ENCODE measurements at regions of chrX and their contacts with region 1.

Region 1: DNA sequence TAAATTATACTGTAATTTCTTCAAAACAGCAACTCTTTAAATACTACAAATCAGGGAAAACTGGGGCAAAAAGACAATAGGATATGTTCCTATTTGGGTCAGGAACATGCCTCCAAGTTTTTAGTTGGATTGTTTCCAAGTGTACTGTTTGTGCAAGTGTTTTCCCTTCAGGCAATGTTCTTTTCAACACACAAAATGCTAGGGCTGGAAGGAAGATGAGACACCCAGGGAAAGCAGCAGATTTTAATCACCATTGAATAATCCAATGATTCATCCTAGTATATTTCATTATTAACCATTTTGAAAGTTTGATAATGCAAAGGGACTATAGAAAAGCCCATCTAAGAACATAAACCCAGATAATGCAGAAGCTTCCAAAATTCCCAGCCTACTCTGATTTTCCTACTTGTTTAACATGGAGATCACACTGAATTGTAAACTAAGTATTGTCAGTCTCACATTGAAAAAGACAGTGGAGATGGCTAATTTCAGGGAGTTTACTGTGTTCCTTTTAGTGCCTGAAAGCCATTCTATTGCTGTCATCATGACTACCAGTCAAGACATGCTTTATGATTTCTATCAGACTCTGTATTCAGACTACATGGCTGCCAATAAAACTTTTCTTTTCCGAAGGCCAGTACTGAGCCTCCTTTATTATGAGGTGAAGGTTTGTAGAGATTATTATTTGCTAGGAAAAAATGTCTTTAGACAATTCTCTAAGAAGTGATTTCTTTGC is 38.6 kb downstream of the COL4A6 start:
- DNase-seq: peak; percentile 10 to 70
- H3K4me3 ChIP-seq: 0 out of 2 replicates have a peak overlapping the region, but pooled peaks have one; percentile 15
- H3K27ac ChIP-seq: peak overlapping the region; percentile 88
- H3K4me1 ChIP-seq: peaks cover 62% of the 10 kb centered on the region
- H3K27me3 ChIP-seq: no peaks in the 10 kb centered on the region
- CTCF ChIP-seq: no peak

Region 2: DNA sequence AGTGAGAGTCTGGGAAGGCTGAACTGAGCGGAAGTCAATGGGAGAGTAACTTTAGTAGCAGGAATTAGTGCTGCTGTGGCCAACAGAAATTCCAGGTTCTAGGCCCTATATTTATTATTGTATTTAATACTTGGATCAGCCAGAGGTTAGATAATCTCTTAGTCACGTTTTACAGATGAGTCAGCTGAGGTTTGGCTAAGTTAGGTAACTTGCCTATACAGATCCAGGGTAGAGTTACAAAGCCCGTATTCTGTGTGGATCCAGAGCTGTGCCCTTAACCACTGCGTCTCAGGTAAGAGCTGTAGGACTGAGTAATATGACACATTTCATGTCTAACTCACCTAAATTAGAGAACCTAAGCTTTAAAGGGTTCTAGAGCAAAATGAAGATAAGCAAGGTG is 328.7 kb before region 1 on chrX:
- CTCF ChIA-PET with region 1: no interaction called
- POLR2A ChIA-PET with region 1: no interaction called
- intact Hi-C with region 1: no loop called
- DNase-seq: peak; percentile 19 to 73
- H3K4me3 ChIP-seq: no peak overlapping the region
- H3K27ac ChIP-seq: peak overlapping the region; percentile 44; the same call in 1 of the 2 replicates
- H3K4me1 ChIP-seq: peaks cover 19% of the 10 kb centered on the region
- H3K27me3 ChIP-seq: no peaks in the 10 kb centered on the region
- CTCF ChIP-seq: no peak

Region 3: GRCh38 chrX:108312938-108313337 is 86.7 kb before region 1 on chrX:
- CTCF ChIA-PET with region 1: interaction called, 3 read pairs
- POLR2A ChIA-PET with region 1: no interaction called
- intact Hi-C with region 1: loop called (anchors 1 kb)
- DNase-seq: peak; percentile 68 to 84
- H3K4me3 ChIP-seq: no peak overlapping the region
- H3K27ac ChIP-seq: 0 out of 2 replicates have a peak overlapping the region, but pooled peaks have one; percentile 18
- H3K4me1 ChIP-seq: peaks cover 22% of the 10 kb centered on the region; the same call in 1 of the 2 replicates
- H3K27me3 ChIP-seq: no peaks in the 10 kb centered on the region
- CTCF ChIP-seq: no peak

Region 4: GRCh38 chrX:108439434-108439883 is 39.9 kb after region 1 on chrX and contains the start of gene COL4A5:
- CTCF ChIA-PET with region 1: no interaction called
- POLR2A ChIA-PET with region 1: no interaction called
- intact Hi-C with region 1: loop called (anchors 1 kb)
- DNase-seq: peak; percentile 72 to 79
- H3K4me3 ChIP-seq: peak within 1 kb of the TSS; percentile 85
- H3K27ac ChIP-seq: no peak within 1 kb of the TSS
- H3K4me1 ChIP-seq: peaks cover 26% of the 10 kb centered on the region
- H3K27me3 ChIP-seq: no peaks in the 10 kb centered on the region
- CTCF ChIP-seq: no peak
- total RNA-seq, gene COL4A5: 82.3 and 102 TPM in 2 replicates

Region 5: GRCh38 chrX:108736509-108737479 is 337.2 kb after region 1 on chrX and contains the start of gene IRS4:
- CTCF ChIA-PET with region 1: no interaction called
- POLR2A ChIA-PET with region 1: no interaction called
- intact Hi-C with region 1: no loop called
- DNase-seq: peak in 1 of 2 experiments; percentile 38
- H3K4me3 ChIP-seq: peak within 1 kb of the TSS; percentile 48; the same call in 1 of the 2 replicates
- H3K27ac ChIP-seq: no peak within 1 kb of the TSS
- H3K4me1 ChIP-seq: no peaks in the 10 kb centered on the region
- H3K27me3 ChIP-seq: peaks cover 32% of the 10 kb centered on the region; the same call in 1 of the 2 replicates
- CTCF ChIP-seq: no peak
- total RNA-seq, gene IRS4: not detected in 2 replicates

Region 6: GRCh38 chrX:110394671-110395070 is 1995.1 kb after region 1 on chrX:
- CTCF ChIA-PET with region 1: no interaction called
- POLR2A ChIA-PET with region 1: no interaction called
- intact Hi-C with region 1: loop called (anchors 5 kb)
- DNase-seq: peak; percentile 66 to 94
- H3K4me3 ChIP-seq: no peak overlapping the region
- H3K27ac ChIP-seq: peak overlapping the region; percentile 77
- H3K4me1 ChIP-seq: peaks cover 51% of the 10 kb centered on the region
- H3K27me3 ChIP-seq: no peaks in the 10 kb centered on the region
- CTCF ChIP-seq: no peak

Measured in PC-9 (cell line).